CD8-positive, alpha-beta memory T cell (primary cell): ENCODE measurements at regions of chr1 and their contacts with region 1.

Region 1: GRCh38 chr1:145845514-145846161 is at the start of gene NUDT17:
- DNase-seq: peak; percentile 65 to 84 (median 71)
- H3K4me3 ChIP-seq: peak within 1 kb of the TSS; percentile 75
- H3K4me3 Mint-ChIP-seq: no peak within 1 kb of the TSS
- H3K27ac ChIP-seq: peak within 1 kb of the TSS; percentile 68
- H3K27ac Mint-ChIP-seq: peak within 1 kb of the TSS in 7 of 8 donors; percentile 51 to 89 (median 83)
- H3K4me1 ChIP-seq: peaks cover 10% of the 10 kb centered on the region
- H3K4me1 Mint-ChIP-seq: peaks cover 5 to 7% (median 6%) of the 10 kb centered on the region in 3 donors
- H3K27me3 ChIP-seq: no peaks in the 10 kb centered on the region
- H3K27me3 Mint-ChIP-seq: no peaks in the 10 kb centered on the region
- total RNA-seq, gene NUDT17: 1.6 to 2.2 TPM

Region 2: GRCh38 chr1:145690624-145691035 is 155.0 kb before region 1 on chr1:
- CTCF ChIA-PET with region 1: no interaction called
- POLR2A ChIA-PET with region 1: no interaction called
- DNase-seq: peak; percentile 15 to 60 (median 18)
- H3K4me3 ChIP-seq: no peak overlapping the region
- H3K4me3 Mint-ChIP-seq: peak overlapping the region; percentile 2 to 78 (median 65)
- H3K27ac ChIP-seq: no peak overlapping the region
- H3K27ac Mint-ChIP-seq: peak overlapping the region; percentile 72 to 95 (median 87)
- H3K4me1 ChIP-seq: peaks cover 35% of the 10 kb centered on the region
- H3K4me1 Mint-ChIP-seq: peaks cover 39 to 50% (median 41%) of the 10 kb centered on the region in 3 donors
- H3K27me3 ChIP-seq: no peaks in the 10 kb centered on the region
- H3K27me3 Mint-ChIP-seq: no peaks in the 10 kb centered on the region

Region 3: GRCh38 chr1:145757420-145757819 is 88.2 kb before region 1 on chr1:
- CTCF ChIA-PET with region 1: no interaction called
- POLR2A ChIA-PET with region 1: no interaction called
- DNase-seq: no peak
- H3K4me3 ChIP-seq: no peak overlapping the region
- H3K4me3 Mint-ChIP-seq: no peak overlapping the region
- H3K27ac ChIP-seq: no peak overlapping the region
- H3K27ac Mint-ChIP-seq: peak overlapping the region in 5 of 8 donors; percentile 0 to 43 (median 29)
- H3K4me1 ChIP-seq: no peaks in the 10 kb centered on the region
- H3K4me1 Mint-ChIP-seq: peaks cover 0 to 4% (median 2%) of the 10 kb centered on the region in 3 donors
- H3K27me3 ChIP-seq: no peaks in the 10 kb centered on the region
- H3K27me3 Mint-ChIP-seq: no peaks in the 10 kb centered on the region

Region 4: GRCh38 chr1:145871994-145872924 is 26.6 kb after region 1 on chr1:
- CTCF ChIA-PET with region 1: interaction called, 28 read pairs
- POLR2A ChIA-PET with region 1: interaction called, 8 read pairs
- DNase-seq: peak in 4 of 5 donors; percentile 6 to 56 (median 40)
- H3K4me3 ChIP-seq: peak overlapping the region; percentile 51
- H3K4me3 Mint-ChIP-seq: peak overlapping the region; percentile 74 to 93 (median 84)
- H3K27ac ChIP-seq: no peak overlapping the region
- H3K27ac Mint-ChIP-seq: peak overlapping the region; percentile 9 to 93 (median 82)
- H3K4me1 ChIP-seq: peaks cover 12% of the 10 kb centered on the region
- H3K4me1 Mint-ChIP-seq: peaks cover 16 to 24% (median 21%) of the 10 kb centered on the region in 3 donors
- H3K27me3 ChIP-seq: no peaks in the 10 kb centered on the region
- H3K27me3 Mint-ChIP-seq: peaks cover 4 to 13% of the 10 kb centered on the region in 2 donors

Region 5: GRCh38 chr1:145906954-145907753 is 61.5 kb after region 1 on chr1:
- CTCF ChIA-PET with region 1: interaction called, 42 read pairs
- POLR2A ChIA-PET with region 1: interaction called, 7 read pairs
- DNase-seq: no peak
- H3K4me3 ChIP-seq: no peak overlapping the region
- H3K4me3 Mint-ChIP-seq: no peak overlapping the region
- H3K27ac ChIP-seq: no peak overlapping the region
- H3K27ac Mint-ChIP-seq: no peak overlapping the region
- H3K4me1 ChIP-seq: no peaks in the 10 kb centered on the region
- H3K4me1 Mint-ChIP-seq: peaks cover 4 to 11% (median 6%) of the 10 kb centered on the region in 3 donors
- H3K27me3 ChIP-seq: no peaks in the 10 kb centered on the region
- H3K27me3 Mint-ChIP-seq: peaks cover 0 to 3% of the 10 kb centered on the region in 2 donors

Region 6: DNA sequence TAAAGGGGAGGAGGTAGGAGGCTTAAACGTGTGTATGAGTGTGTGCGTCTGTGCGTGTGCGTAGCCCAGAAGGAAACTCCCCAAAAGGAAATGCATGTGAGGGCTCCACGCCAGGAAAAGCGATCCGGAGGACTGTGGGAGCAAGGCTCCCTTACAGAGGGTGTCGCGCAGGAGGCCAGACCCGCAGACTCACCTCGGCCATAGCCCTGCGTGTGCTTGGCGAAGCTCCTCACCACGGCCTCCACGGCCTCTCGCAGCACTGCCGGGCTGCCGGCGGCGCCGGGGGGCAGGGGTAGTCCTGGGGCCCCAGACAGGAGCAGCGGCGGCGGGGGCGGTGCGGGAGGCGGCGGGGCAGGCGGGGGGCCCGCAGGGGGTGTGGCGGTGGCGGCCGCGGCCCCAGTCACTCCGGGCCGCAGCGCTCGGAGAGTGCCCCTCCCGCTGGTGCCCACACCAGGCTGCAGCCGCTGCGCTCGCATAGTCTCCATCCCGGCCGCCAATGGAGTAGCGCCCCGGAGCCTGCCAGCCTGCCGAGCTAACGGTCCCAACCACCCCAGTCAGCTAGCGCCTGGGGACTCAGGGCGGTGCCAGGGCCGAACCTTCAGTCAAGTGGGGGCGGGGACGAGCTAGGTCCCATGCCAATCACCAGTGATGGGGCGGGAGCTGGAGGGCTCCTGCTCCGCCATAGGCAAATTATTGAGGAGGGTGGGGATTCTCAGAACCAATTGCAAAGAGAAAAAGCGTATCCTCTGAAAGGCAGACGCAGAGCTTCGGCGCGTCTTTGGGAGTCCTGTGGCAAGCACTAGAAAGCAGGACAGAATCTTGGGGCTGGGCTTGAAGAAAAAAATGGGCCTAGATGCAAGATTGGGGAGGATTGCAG is 112.0 kb after region 1 on chr1 and contains the start of gene LIX1L:
- CTCF ChIA-PET with region 1: interaction called, 18 read pairs
- POLR2A ChIA-PET with region 1: no interaction called
- DNase-seq: peak; percentile 92 to 96 (median 93)
- H3K4me3 ChIP-seq: peak within 1 kb of the TSS; percentile 94
- H3K4me3 Mint-ChIP-seq: peak within 1 kb of the TSS; percentile 83 to 98 (median 92)
- H3K27ac ChIP-seq: peak within 1 kb of the TSS; percentile 76
- H3K27ac Mint-ChIP-seq: peak within 1 kb of the TSS; percentile 91 to 98 (median 97)
- H3K4me1 ChIP-seq: peaks cover 64% of the 10 kb centered on the region
- H3K4me1 Mint-ChIP-seq: peaks cover 68 to 74% (median 74%) of the 10 kb centered on the region in 3 donors
- H3K27me3 ChIP-seq: no peaks in the 10 kb centered on the region
- H3K27me3 Mint-ChIP-seq: peaks cover 0 to 3% of the 10 kb centered on the region in 2 donors
- total RNA-seq, gene LIX1L: 41.8 to 42.6 TPM

Region 7: DNA sequence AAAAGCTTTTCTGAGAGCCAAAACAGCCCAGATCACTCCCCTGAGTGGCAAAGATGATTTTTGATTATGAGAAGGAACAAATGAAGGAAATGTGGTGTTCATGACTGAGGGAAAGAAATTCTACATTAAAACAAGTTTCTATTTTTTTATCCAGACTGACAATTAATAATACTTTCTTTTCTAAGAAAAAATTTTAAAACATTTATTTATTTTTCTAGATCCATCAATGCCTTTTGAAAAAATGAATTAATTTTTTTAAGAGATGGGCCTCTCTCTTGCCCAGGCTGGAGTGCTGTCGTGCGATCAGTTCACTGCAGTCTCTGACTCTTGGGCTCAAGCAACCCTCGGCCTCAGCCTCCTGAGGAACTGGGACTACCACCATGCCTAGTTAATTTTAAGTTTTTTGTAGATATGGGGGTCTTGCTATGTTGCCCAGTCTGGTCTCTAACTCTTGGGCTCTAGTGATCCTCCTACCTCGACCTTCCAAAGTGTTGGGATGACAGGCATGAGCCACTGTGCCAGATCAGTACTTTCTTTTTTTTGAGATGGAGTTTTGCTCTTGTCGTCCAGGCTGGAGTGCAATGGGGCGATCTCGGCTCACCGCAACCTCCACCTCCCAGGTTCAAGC is 162.0 kb after region 1 on chr1:
- CTCF ChIA-PET with region 1: interaction called, 65 read pairs
- POLR2A ChIA-PET with region 1: interaction called, 3 read pairs
- DNase-seq: no peak
- H3K4me3 ChIP-seq: no peak overlapping the region
- H3K4me3 Mint-ChIP-seq: peak overlapping the region in 6 of 7 donors; percentile 69 to 87 (median 82)
- H3K27ac ChIP-seq: no peak overlapping the region
- H3K27ac Mint-ChIP-seq: peak overlapping the region; percentile 47 to 93 (median 75)
- H3K4me1 ChIP-seq: peaks cover 33% of the 10 kb centered on the region
- H3K4me1 Mint-ChIP-seq: peaks cover 31 to 50% (median 39%) of the 10 kb centered on the region in 3 donors
- H3K27me3 ChIP-seq: no peaks in the 10 kb centered on the region
- H3K27me3 Mint-ChIP-seq: no peaks in the 10 kb centered on the region

Region 8: DNA sequence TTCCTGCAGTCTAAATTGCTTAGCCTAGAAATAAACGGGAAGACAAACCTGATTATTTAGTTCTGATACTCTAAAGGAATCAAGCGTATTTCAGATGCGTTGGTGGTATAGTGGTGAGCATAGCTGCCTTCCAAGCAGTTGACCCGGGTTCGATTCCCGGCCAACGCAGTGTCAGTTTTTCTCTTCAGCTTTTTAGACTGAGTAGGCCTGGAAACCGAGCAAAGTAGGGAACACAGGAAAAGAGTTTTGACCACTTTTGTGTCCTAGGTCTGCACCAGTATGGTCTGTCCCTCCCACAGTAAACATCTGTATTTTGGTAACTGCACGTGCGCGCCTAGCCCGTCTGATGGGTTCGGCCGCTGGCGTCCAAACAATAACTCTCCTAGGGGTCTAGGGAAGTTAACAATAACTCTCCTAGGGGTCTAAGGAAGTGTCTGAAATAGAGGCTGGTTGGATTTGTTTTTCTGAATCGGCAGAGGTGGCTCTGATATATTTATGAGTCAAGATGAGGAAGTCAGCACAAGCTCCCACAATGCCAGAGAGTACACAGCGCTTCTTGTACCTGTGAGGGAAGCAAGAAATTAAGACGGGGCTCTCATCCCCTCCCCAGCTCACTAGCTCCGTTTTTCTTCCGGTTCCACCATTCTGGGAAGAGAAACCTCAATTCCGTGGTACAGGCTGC is 191.5 kb after region 1 on chr1:
- CTCF ChIA-PET with region 1: interaction called, 19 read pairs
- POLR2A ChIA-PET with region 1: interaction called, 6 read pairs
- DNase-seq: peak; percentile 48 to 82 (median 79)
- H3K4me3 ChIP-seq: peak overlapping the region; percentile 88
- H3K4me3 Mint-ChIP-seq: peak overlapping the region; percentile 93 to 99 (median 97)
- H3K27ac ChIP-seq: peak overlapping the region; percentile 64
- H3K27ac Mint-ChIP-seq: peak overlapping the region; percentile 94 to 98 (median 96)
- H3K4me1 ChIP-seq: peaks cover 10% of the 10 kb centered on the region
- H3K4me1 Mint-ChIP-seq: peaks cover 37 to 52% (median 43%) of the 10 kb centered on the region in 3 donors
- H3K27me3 ChIP-seq: no peaks in the 10 kb centered on the region
- H3K27me3 Mint-ChIP-seq: peaks cover 3 to 24% of the 10 kb centered on the region in 2 donors